Activated CD8-positive, alpha-beta T cell treated with anti-CD3 and anti-CD28 coated beads, Interleukin-2, amount 10 ng/mL, durations not matched to agents 7 days and 5 days (primary cell): ENCODE measurements at regions of chr4 and their contacts with region 1.

Region 1: DNA sequence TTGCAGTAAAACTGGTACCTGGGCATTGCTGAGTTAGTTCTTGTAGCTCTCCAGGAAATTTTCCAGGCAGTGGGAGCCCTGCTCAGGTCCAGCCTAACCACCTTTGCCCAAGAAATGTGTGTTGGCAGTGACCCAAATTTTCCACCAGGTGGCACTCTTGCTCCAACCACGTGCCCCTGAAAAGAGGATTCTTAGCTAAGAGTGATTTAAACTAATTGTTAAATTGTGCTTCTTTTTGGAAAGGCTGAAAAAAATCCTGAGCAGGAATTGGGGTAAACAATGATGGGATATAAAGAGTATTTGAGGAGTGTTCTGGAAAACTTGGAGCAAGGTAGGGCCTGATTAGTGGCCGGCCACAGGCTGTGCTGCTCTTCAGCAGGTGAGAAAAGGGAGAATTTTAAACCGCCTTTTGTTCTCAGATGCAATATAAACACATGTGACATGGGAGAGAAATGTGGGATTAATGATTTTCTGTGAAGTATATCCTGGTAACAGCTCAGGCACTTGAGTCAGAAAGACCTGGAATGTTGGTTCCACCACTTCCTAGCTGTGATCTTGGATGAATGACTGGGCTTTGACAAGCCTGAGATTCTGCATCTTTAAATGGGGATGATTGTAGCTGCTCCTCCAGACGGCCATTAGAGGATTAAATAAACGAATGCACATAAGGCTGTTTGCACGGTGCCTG is 219.6 kb downstream of the PTTG2 start:
- DNase-seq: peak; percentile 78
- ATAC-seq: peak; percentile 52
- H3K4me3 Mint-ChIP-seq: no peak overlapping the region
- H3K27ac Mint-ChIP-seq: peak overlapping the region; percentile 12
- H3K4me1 Mint-ChIP-seq: peaks cover 36% of the 10 kb centered on the region
- H3K27me3 Mint-ChIP-seq: peaks cover 2% of the 10 kb centered on the region

Region 2: DNA sequence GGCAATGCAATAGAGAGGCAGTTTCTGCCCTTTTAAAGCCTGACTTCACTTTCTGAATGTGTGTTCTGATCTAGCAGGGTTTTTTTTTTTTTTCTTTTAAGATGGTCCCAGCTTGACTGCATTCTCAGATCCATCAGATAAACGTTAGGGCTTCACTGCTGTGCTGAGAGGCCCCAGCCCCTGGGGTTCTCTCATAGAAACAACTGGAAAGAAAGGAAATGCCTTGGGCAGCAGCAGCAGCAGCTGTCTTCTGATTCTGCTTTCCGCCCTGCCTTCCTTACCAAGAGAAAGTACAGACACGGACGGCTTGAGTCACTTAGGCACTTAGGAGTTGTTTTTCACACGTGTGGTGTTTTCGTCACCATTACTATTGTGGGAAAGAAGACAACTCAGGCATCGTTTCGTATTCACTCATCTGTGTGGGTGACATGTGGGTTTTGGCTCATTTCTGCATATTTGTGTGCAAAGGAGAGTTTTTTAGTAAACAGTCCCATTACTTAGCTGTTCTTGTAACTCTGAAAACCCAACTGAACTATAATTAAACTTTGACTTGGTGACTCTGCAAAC is 47.6 kb before region 1 on chr4:
- CTCF ChIA-PET with region 1: interaction called, 11 read pairs
- POLR2A ChIA-PET with region 1: no interaction called
- DNase-seq: peak; percentile 83
- ATAC-seq: peak; percentile 81
- H3K4me3 Mint-ChIP-seq: peak overlapping the region; percentile 51
- H3K27ac Mint-ChIP-seq: peak overlapping the region; percentile 85
- H3K4me1 Mint-ChIP-seq: peaks cover 63% of the 10 kb centered on the region
- H3K27me3 Mint-ChIP-seq: no peaks in the 10 kb centered on the region

Region 3: GRCh38 chr4:38202242-38202641 is 22.4 kb after region 1 on chr4:
- CTCF ChIA-PET with region 1: interaction called, 10 read pairs
- POLR2A ChIA-PET with region 1: no interaction called
- DNase-seq: no peak
- ATAC-seq: no peak
- H3K4me3 Mint-ChIP-seq: no peak overlapping the region
- H3K27ac Mint-ChIP-seq: no peak overlapping the region
- H3K4me1 Mint-ChIP-seq: no peaks in the 10 kb centered on the region
- H3K27me3 Mint-ChIP-seq: no peaks in the 10 kb centered on the region

Region 4: DNA sequence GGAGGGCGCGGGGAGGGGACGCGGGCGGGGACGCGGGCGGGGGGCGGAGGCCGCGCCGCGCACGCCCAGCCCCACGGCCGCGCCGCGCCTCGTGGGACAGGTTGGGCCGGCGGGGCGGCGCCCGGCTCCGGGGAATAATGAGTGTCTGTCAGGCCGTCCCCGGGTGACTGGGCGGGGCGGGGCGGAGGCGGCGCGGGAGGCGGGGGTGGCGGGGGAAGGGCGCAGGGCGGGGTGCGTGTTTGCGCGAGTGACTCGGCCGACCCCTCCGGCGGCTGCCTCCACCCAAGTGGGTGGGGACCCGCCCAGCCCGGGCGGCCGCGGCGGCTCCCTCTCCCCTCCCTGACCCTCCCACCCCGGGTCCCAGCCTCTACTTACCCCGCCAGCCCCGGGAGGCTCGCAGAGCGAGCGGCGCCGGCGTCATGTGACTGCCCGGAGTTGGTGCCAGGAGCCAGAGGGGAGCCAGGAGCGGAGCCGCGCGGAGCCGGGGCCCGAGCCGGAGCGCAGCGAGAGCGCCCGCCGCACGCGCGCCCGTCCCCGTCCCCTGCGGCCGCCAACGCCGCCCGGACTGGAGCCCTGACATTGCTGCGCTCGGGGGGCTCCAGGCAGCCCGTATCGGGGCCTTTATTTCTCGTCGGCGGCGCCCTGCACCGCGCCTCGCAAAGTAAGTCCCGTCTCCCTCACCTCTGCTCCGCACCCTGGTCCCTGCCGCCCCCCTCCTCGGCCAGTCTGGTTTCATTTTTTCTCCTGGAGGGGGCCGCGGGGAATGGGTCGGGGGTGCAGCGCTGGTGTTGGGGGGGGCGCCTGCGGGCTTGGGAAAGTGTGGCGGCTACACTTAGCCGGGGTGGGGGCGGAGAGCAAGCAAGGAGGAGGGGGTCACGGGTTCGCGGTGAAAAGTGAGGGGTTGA is 484.2 kb after region 1 on chr4 and contains the start of gene KLF3:
- CTCF ChIA-PET with region 1: interaction called, 42 read pairs
- POLR2A ChIA-PET with region 1: no interaction called
- DNase-seq: peak; percentile 90
- ATAC-seq: peak; percentile 88
- H3K4me3 Mint-ChIP-seq: peak within 1 kb of the TSS; percentile 78
- H3K27ac Mint-ChIP-seq: peak within 1 kb of the TSS; percentile 75
- H3K4me1 Mint-ChIP-seq: peaks cover 53% of the 10 kb centered on the region
- H3K27me3 Mint-ChIP-seq: peaks cover 5% of the 10 kb centered on the region
- total RNA-seq, gene KLF3: 8.1 to 8.3 TPM

Region 5: GRCh38 chr4:38738940-38739803 is 559.3 kb after region 1 on chr4:
- CTCF ChIA-PET with region 1: interaction called, 13 read pairs
- POLR2A ChIA-PET with region 1: no interaction called
- DNase-seq: no peak
- ATAC-seq: no peak
- H3K4me3 Mint-ChIP-seq: no peak overlapping the region
- H3K27ac Mint-ChIP-seq: no peak overlapping the region
- H3K4me1 Mint-ChIP-seq: peaks cover 5% of the 10 kb centered on the region
- H3K27me3 Mint-ChIP-seq: peaks cover 6% of the 10 kb centered on the region